CD4-positive, alpha-beta memory T cell (primary cell): ENCODE measurements at regions of chr20 and their contacts with region 1.

Region 1: DNA sequence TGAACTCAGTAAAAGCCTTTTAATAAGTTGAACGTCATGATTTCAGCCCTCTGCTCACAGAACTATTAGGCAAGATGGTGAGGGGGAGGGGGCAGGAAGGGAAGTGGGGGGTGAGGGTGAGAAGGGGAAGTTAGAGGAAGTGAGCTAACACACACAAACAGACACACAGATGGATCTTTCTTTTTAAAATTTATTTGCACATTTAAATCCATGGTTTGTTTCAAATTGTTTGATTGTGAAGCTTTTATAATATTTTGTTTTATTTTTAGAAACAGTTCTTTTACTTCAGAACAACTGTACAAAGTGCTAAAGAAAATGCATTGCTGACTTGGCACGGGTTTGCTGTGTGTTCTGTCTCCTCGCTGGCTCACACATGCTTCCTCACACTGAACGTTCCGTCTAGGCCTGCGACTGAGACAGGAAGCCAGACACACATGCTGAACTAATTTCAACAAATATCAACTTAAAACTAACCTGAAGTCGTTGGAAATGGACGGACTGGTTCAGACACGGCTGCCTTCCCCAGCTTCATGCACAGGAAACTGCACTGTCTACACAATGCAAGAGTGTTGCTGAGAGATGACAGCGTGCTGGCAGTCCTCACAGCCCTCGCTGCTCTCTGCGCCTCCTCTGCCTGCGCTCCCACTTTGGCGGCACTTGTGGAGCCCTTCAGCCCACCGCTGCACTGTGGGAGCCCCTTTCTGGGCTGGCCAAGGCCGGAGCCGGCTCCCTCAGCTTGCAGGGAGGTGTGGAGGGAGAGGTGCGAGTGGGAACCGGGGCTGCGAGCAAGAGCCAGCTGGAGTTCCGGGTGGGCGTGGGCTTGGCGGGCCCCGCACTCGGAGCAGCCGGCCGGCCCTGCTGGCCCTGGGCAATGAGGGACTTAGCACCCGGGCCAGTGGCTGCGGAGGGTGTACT is 8.1 kb upstream of the ZBP1 start:
- DNase-seq: peak; percentile 61 to 88 (median 67)
- H3K4me3 ChIP-seq: peak overlapping the region in 1 of 2 donors; percentile 18
- H3K4me3 Mint-ChIP-seq: peak overlapping the region; percentile 80 to 92 (median 83)
- H3K27ac ChIP-seq: peak overlapping the region; percentile 71
- H3K27ac Mint-ChIP-seq: peak overlapping the region; percentile 89 to 99 (median 98)
- H3K4me1 ChIP-seq: peaks cover 67% of the 10 kb centered on the region
- H3K4me1 Mint-ChIP-seq: peaks cover 36 to 87% (median 61%) of the 10 kb centered on the region in 4 donors
- H3K27me3 ChIP-seq: peaks cover 6% of the 10 kb centered on the region
- H3K27me3 Mint-ChIP-seq: peaks cover 0 to 5% of the 10 kb centered on the region in 2 donors

Region 2: GRCh38 chr20:57709931-57710799 is 81.9 kb after region 1 on chr20 and contains the start of gene PMEPA1:
- CTCF ChIA-PET with region 1: interaction called, 11 read pairs
- POLR2A ChIA-PET with region 1: interaction called, 19 read pairs
- intact Hi-C with region 1: no loop called
- DNase-seq: peak; percentile 91 to 96 (median 92)
- H3K4me3 ChIP-seq: peak within 1 kb of the TSS; percentile 81 to 87
- H3K4me3 Mint-ChIP-seq: peak within 1 kb of the TSS; percentile 87 to 94 (median 91)
- H3K27ac ChIP-seq: peak within 1 kb of the TSS; percentile 67
- H3K27ac Mint-ChIP-seq: peak within 1 kb of the TSS; percentile 92 to 98 (median 96)
- H3K4me1 ChIP-seq: peaks cover 17% of the 10 kb centered on the region
- H3K4me1 Mint-ChIP-seq: peaks cover 16 to 47% (median 27%) of the 10 kb centered on the region in 4 donors
- H3K27me3 ChIP-seq: no peaks in the 10 kb centered on the region
- H3K27me3 Mint-ChIP-seq: peaks cover 3 to 10% of the 10 kb centered on the region in 2 donors
- total RNA-seq, gene PMEPA1: 8.1 to 8.9 TPM

Region 3: DNA sequence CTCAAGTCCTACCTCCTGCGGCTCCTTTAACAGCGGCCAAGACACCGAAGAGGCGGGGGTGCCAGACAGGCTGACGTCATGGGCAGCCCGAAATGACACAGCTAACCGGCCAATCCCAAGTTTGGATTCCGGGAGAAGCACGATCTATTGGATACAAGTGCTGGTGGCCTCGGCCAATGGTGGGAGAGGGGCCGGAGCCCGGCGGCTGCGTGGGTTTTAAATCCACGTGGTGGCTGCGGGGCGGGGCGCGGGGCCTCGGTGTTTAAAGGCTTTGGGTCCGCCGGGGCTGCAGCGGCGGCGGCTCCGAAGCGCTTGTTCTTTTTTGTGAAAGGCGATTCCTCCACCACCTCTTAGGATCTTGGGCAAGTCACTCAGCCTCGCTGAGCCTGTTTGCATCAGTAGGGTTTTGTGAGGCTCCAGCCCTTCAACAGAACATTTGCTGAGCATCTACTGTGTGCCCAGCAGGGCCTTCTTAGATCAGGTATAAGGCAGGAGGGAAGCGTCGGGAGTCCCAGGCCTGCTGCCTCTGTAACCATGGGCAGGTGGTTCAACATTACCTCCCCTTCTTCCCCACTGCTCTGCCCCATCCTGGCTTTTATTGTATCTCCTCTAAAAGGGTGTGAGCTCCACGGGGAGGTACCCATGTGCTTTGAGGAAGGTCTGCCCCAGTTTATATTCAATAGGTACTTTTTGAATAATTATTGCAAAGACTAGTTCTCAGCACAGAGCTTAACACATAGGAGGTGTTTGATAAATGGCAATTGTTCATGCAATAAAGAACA is 90.4 kb after region 1 on chr20:
- CTCF ChIA-PET with region 1: no interaction called
- POLR2A ChIA-PET with region 1: no interaction called
- intact Hi-C with region 1: loop called (anchors 2 kb)
- DNase-seq: peak; percentile 85 to 95 (median 88)
- H3K4me3 ChIP-seq: no peak overlapping the region
- H3K4me3 Mint-ChIP-seq: peak overlapping the region; percentile 57 to 78 (median 70)
- H3K27ac ChIP-seq: no peak overlapping the region
- H3K27ac Mint-ChIP-seq: peak overlapping the region; percentile 53 to 87 (median 78)
- H3K4me1 ChIP-seq: peaks cover 7% of the 10 kb centered on the region
- H3K4me1 Mint-ChIP-seq: peaks cover 2 to 12% (median 7%) of the 10 kb centered on the region in 4 donors
- H3K27me3 ChIP-seq: no peaks in the 10 kb centered on the region
- H3K27me3 Mint-ChIP-seq: peaks cover 7 to 12% of the 10 kb centered on the region in 2 donors